Activated CD4-positive, alpha-beta T cell treated with anti-CD3 and anti-CD28 coated beads, Interleukin-2, amount 10 ng/mL, durations not matched to agents 24 days and 14 days (primary cell): ENCODE measurements at regions of chr2 and their contacts with region 1.

Region 1: GRCh38 chr2:215982080-215982875 is 31.1 kb downstream of the MREG start:
- DNase-seq: no peak
- H3K4me3 Mint-ChIP-seq: no peak overlapping the region
- H3K27ac Mint-ChIP-seq: peak overlapping the region; percentile 64
- H3K4me1 Mint-ChIP-seq: peaks cover 29% of the 10 kb centered on the region
- H3K27me3 Mint-ChIP-seq: no peaks in the 10 kb centered on the region

Region 2: GRCh38 chr2:215931256-215931903 is 50.9 kb before region 1 on chr2:
- intact Hi-C with region 1: no loop called
- DNase-seq: peak; percentile 86
- H3K4me3 Mint-ChIP-seq: no peak overlapping the region
- H3K27ac Mint-ChIP-seq: no peak overlapping the region
- H3K4me1 Mint-ChIP-seq: peaks cover 6% of the 10 kb centered on the region
- H3K27me3 Mint-ChIP-seq: peaks cover 2% of the 10 kb centered on the region

Region 3: DNA sequence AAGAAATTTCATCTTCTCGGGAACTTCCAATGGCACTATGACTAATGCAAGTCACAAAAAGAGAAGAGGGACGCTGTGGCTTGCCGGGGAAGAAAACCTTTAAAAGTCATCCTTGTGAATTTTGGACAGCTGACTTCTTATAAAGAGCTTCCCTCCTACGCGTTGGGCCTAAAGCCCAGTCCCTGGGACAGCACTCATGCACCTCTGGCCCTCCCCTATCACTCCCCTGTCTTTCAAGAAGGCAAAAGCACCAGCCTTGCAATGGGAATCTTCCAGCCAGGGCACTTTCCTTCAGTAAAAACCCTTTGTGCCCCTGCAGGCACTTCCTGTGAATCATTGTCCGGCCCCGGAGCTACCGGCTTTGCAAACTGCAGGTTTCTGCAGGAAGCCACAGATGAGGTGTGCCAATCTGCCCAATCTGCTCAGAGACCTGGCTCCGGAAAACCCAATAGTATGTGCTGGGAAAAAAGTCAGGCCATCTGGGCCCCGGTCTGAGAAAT is 23.9 kb after region 1 on chr2:
- intact Hi-C with region 1: loop called (anchors 2 kb)
- DNase-seq: peak; percentile 79
- H3K4me3 Mint-ChIP-seq: peak overlapping the region; percentile 74
- H3K27ac Mint-ChIP-seq: peak overlapping the region; percentile 93
- H3K4me1 Mint-ChIP-seq: peaks cover 36% of the 10 kb centered on the region
- H3K27me3 Mint-ChIP-seq: no peaks in the 10 kb centered on the region